WTC11 (cell line): ENCODE measurements at regions of chr1 and their contacts with region 1.

Region 1: GRCh38 chr1:203504397-203505250 is 10.7 kb downstream of the OPTC start:
- DNase-seq: peak; percentile 87
- ATAC-seq: peak; percentile 88
- H3K4me3 Mint-ChIP-seq: no peak overlapping the region
- H3K27ac Mint-ChIP-seq: no peak overlapping the region
- H3K4me1 Mint-ChIP-seq: peaks cover 34% of the 10 kb centered on the region
- H3K27me3 Mint-ChIP-seq: no peaks in the 10 kb centered on the region; the same call in 1 of the 2 replicates
- CTCF ChIP-seq: peak; percentile 72

Region 2: GRCh38 chr1:203492748-203493130 is 11.9 kb before region 1 on chr1:
- CTCF ChIA-PET with region 1: interaction called, 30 read pairs
- POLR2A ChIA-PET with region 1: no interaction called
- DNase-seq: no peak
- ATAC-seq: no peak
- H3K4me3 Mint-ChIP-seq: no peak overlapping the region
- H3K27ac Mint-ChIP-seq: no peak overlapping the region
- H3K4me1 Mint-ChIP-seq: peaks cover 23% of the 10 kb centered on the region
- H3K27me3 Mint-ChIP-seq: peaks cover 3% of the 10 kb centered on the region
- CTCF ChIP-seq: no peak

Region 3: GRCh38 chr1:203573730-203574129 is 69.1 kb after region 1 on chr1:
- CTCF ChIA-PET with region 1: interaction called, 14 read pairs
- POLR2A ChIA-PET with region 1: no interaction called
- DNase-seq: no peak
- ATAC-seq: peak; percentile 77
- H3K4me3 Mint-ChIP-seq: no peak overlapping the region
- H3K27ac Mint-ChIP-seq: no peak overlapping the region
- H3K4me1 Mint-ChIP-seq: peaks cover 10% of the 10 kb centered on the region
- H3K27me3 Mint-ChIP-seq: no peaks in the 10 kb centered on the region; the same call in 1 of the 2 replicates
- CTCF ChIP-seq: no peak

Region 4: GRCh38 chr1:203600782-203601736 is 96.4 kb after region 1 on chr1:
- CTCF ChIA-PET with region 1: interaction called, 10 read pairs
- POLR2A ChIA-PET with region 1: no interaction called
- DNase-seq: no peak
- ATAC-seq: peak; percentile 65
- H3K4me3 Mint-ChIP-seq: no peak overlapping the region
- H3K27ac Mint-ChIP-seq: no peak overlapping the region
- H3K4me1 Mint-ChIP-seq: peaks cover 35% of the 10 kb centered on the region
- H3K27me3 Mint-ChIP-seq: peaks cover 7% of the 10 kb centered on the region; the same call in 1 of the 2 replicates
- CTCF ChIP-seq: no peak

Region 5: GRCh38 chr1:203702130-203702577 is 197.5 kb after region 1 on chr1:
- CTCF ChIA-PET with region 1: interaction called, 64 read pairs
- POLR2A ChIA-PET with region 1: no interaction called
- DNase-seq: peak; percentile 84
- ATAC-seq: peak; percentile 93
- H3K4me3 Mint-ChIP-seq: no peak overlapping the region
- H3K27ac Mint-ChIP-seq: no peak overlapping the region
- H3K4me1 Mint-ChIP-seq: no peaks in the 10 kb centered on the region
- H3K27me3 Mint-ChIP-seq: no peaks in the 10 kb centered on the region
- CTCF ChIP-seq: peak; percentile 82